ENCODE measurements at regions of chr12 and their contacts with region 1.

Region 1: DNA sequence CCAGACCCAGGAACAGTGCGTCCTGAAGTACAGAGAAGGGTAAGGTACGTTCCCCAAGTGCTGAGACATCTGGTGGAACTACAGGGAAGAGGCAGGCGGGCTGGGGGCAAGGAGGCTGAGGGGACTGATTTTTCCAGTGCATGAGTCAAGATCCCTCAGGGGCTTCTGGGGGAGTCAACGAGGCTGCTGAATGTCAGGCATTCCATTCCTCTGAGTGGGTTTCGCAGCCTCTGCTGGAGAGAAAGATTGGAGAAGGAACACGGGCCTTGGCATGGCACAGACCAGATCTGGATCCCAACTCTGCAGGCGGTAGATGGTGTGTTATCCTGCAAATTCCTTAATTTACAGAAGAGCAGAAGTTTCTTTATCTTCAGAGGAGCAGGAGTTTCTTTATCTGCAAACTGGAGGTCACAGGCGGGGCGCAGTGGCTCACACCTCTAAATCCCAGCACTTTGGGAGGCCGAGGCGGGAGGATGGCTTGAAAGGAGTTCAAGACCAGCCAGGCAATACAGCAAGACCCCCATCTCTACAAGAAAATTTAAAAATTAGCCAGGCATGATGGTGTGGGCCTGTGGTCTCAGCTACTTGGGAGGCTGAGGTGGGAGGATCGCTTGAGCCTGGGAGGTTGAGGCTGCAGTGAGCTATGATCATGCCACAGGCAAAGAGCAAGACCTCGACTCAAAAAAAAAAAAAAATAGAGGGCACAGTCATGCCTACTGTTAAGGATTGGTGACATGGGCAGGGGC is 132.6 kb upstream of the MAP1LC3B2 start:
- DNase-seq: peak; percentile 82 to 92
- H3K4me3 ChIP-seq: no peak overlapping the region
- H3K4me3 Mint-ChIP-seq: peak overlapping the region; percentile 64
- H3K27ac Mint-ChIP-seq: peak overlapping the region; percentile 84
- H3K4me1 ChIP-seq: peaks cover 45% of the 10 kb centered on the region
- H3K4me1 Mint-ChIP-seq: peaks cover 32% of the 10 kb centered on the region
- H3K27me3 ChIP-seq: no peaks in the 10 kb centered on the region
- H3K27me3 Mint-ChIP-seq: no peaks in the 10 kb centered on the region
- CTCF ChIP-seq: peak; percentile 36 to 50

Region 2: DNA sequence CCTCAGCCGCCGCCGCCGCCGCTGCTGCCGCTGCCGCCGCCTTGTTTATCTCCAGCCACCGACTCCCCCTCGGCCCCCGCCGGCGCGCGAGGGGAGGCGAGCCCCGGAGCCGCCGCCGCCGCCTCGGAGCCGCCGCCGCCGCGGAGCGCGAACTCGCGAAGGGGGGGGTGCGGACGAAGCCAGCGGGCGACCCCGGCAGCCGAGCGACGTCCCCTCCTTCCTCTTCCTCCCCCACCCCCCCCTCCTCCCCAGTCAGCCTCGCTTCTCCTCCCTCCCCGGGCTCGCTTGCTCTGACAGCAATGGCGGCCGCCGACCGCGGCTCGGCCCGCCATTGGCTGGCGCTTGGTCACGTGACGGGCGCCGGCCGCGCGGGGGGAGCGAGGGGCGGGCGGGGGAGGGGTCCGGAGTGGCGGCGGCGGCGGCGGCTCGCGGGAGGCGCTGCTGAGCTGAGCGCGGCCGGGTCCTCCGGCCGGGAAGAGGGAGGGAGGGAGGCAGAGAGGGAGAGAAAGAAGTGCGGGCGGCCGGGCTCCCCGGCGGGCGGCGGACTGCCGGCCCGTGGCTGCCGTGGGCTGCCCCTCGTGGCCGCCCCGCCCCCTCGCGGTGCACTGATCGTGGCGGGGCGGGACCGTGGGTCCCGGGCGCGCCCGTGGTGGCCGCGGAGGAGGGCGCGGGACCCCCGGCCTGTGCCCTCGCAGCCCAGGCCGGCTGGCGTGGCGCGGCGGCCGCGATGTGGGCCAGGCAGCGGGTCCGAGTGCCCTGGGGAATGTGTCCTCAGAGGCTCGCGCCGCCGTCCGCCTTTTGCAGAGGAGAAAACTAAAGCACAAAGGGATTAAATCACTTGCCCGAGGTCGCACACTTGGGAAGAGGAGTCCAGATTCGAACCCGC is 148.9 kb before region 1 on chr12 and contains the start of gene MED13L:
- CTCF ChIA-PET with region 1: interaction called, 3 read pairs
- POLR2A ChIA-PET with region 1: no interaction called
- intact Hi-C with region 1: loop called (anchors 2 kb)
- DNase-seq: peak; percentile 86 to 92
- H3K4me3 ChIP-seq: peak within 1 kb of the TSS; percentile 81
- H3K4me3 Mint-ChIP-seq: peak within 1 kb of the TSS; percentile 83
- H3K27ac Mint-ChIP-seq: peak within 1 kb of the TSS; percentile 92
- H3K4me1 ChIP-seq: peaks cover 20% of the 10 kb centered on the region
- H3K4me1 Mint-ChIP-seq: peaks cover 30% of the 10 kb centered on the region
- H3K27me3 ChIP-seq: no peaks in the 10 kb centered on the region
- H3K27me3 Mint-ChIP-seq: no peaks in the 10 kb centered on the region
- CTCF ChIP-seq: peak in 1 of 2 experiments; percentile 18
- total RNA-seq, gene MED13L: 160 and 168 TPM in 2 replicates

Region 3: GRCh38 chr12:116368196-116369194 is 58.1 kb before region 1 on chr12:
- CTCF ChIA-PET with region 1: no interaction called
- POLR2A ChIA-PET with region 1: no interaction called
- intact Hi-C with region 1: loop called (anchors 1 kb)
- DNase-seq: peak; percentile 92 to 96
- H3K4me3 ChIP-seq: no peak overlapping the region
- H3K4me3 Mint-ChIP-seq: peak overlapping the region; percentile 56
- H3K27ac Mint-ChIP-seq: peak overlapping the region; percentile 90
- H3K4me1 ChIP-seq: peaks cover 65% of the 10 kb centered on the region
- H3K4me1 Mint-ChIP-seq: peaks cover 32% of the 10 kb centered on the region
- H3K27me3 ChIP-seq: no peaks in the 10 kb centered on the region
- H3K27me3 Mint-ChIP-seq: no peaks in the 10 kb centered on the region
- CTCF ChIP-seq: no peak

Region 4: GRCh38 chr12:116406516-116406915 is 20.0 kb before region 1 on chr12:
- CTCF ChIA-PET with region 1: interaction called, 4 read pairs
- POLR2A ChIA-PET with region 1: interaction called, 6 read pairs
- intact Hi-C with region 1: loop called (anchors 2 kb)
- DNase-seq: peak; percentile 89 to 94
- H3K4me3 ChIP-seq: no peak overlapping the region
- H3K4me3 Mint-ChIP-seq: no peak overlapping the region
- H3K27ac Mint-ChIP-seq: peak overlapping the region; percentile 63
- H3K4me1 ChIP-seq: peaks cover 12% of the 10 kb centered on the region
- H3K4me1 Mint-ChIP-seq: peaks cover 19% of the 10 kb centered on the region
- H3K27me3 ChIP-seq: no peaks in the 10 kb centered on the region
- H3K27me3 Mint-ChIP-seq: no peaks in the 10 kb centered on the region
- CTCF ChIP-seq: no peak

Region 5: DNA sequence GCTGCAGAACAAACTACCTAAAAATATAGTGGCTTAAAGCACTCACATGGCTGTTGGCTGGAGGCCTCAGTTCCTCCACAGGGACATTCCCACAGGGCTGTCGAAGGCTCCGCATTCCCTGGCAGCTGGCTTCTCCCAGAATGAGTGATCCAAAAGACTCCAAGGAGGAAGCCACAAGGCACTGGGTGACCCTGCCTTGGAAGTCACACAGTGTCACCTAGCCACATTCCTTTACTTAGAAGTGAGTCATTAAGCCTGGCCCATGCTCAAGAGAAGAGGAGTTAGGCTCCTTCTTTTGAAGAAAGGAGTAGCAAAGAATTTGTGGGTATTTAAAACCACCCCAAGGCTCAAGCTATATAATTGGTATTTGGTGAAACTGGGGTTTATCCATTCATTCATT is 68.7 kb after region 1 on chr12:
- CTCF ChIA-PET with region 1: no interaction called
- POLR2A ChIA-PET with region 1: no interaction called
- intact Hi-C with region 1: loop called (anchors 2 kb)
- DNase-seq: peak; percentile 71 to 82
- H3K4me3 ChIP-seq: no peak overlapping the region
- H3K4me3 Mint-ChIP-seq: peak overlapping the region; percentile 42
- H3K27ac Mint-ChIP-seq: peak overlapping the region; percentile 93
- H3K4me1 ChIP-seq: peaks cover 19% of the 10 kb centered on the region
- H3K4me1 Mint-ChIP-seq: peaks cover 41% of the 10 kb centered on the region
- H3K27me3 ChIP-seq: no peaks in the 10 kb centered on the region
- H3K27me3 Mint-ChIP-seq: no peaks in the 10 kb centered on the region
- CTCF ChIP-seq: no peak

Region 6: DNA sequence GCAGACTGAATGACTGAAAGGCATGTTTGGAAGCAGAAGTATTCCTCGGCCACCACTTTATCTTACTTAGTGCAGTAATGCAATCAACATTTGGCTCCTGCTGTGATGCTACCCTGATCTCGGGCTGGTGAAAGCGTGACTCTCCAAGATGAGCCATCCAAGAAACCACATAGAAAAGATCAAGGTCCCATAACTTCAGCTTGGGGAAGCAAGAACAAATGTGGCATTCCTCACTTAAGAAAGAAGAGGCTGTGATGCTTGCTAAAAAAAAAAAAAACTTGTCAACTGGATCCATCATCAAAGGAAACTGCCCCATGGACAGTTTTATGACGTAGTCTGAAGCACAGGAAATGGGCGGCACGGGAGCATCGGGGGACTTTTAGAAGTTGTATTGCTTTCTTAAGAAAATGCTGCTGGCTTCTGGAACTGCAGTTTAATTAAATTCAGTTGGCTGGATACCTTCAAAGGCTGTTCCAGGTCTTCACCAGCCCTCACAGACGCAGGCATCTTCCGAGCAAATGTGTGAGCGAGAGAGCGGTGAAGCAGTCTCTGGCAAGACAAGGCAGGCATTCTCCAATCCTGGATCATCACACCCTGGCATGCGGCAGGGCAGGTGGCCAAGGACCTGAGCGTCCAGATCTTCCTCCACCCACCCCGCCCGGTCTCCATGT is 94.4 kb after region 1 on chr12:
- CTCF ChIA-PET with region 1: no interaction called
- POLR2A ChIA-PET with region 1: no interaction called
- intact Hi-C with region 1: no loop called
- DNase-seq: no peak
- H3K4me3 ChIP-seq: no peak overlapping the region
- H3K4me3 Mint-ChIP-seq: no peak overlapping the region
- H3K27ac Mint-ChIP-seq: no peak overlapping the region
- H3K4me1 ChIP-seq: peaks cover 14% of the 10 kb centered on the region
- H3K4me1 Mint-ChIP-seq: peaks cover 20% of the 10 kb centered on the region
- H3K27me3 ChIP-seq: no peaks in the 10 kb centered on the region
- H3K27me3 Mint-ChIP-seq: no peaks in the 10 kb centered on the region
- CTCF ChIP-seq: no peak

Region 7: GRCh38 chr12:116539905-116540482 is 113.4 kb after region 1 on chr12:
- CTCF ChIA-PET with region 1: no interaction called
- POLR2A ChIA-PET with region 1: no interaction called
- intact Hi-C with region 1: no loop called
- DNase-seq: no peak
- H3K4me3 ChIP-seq: no peak overlapping the region
- H3K4me3 Mint-ChIP-seq: no peak overlapping the region
- H3K27ac Mint-ChIP-seq: no peak overlapping the region
- H3K4me1 ChIP-seq: peaks cover 10% of the 10 kb centered on the region; the same call in 1 of the 2 replicates
- H3K4me1 Mint-ChIP-seq: peaks cover 19% of the 10 kb centered on the region
- H3K27me3 ChIP-seq: no peaks in the 10 kb centered on the region
- H3K27me3 Mint-ChIP-seq: no peaks in the 10 kb centered on the region
- CTCF ChIP-seq: no peak

Region 8: DNA sequence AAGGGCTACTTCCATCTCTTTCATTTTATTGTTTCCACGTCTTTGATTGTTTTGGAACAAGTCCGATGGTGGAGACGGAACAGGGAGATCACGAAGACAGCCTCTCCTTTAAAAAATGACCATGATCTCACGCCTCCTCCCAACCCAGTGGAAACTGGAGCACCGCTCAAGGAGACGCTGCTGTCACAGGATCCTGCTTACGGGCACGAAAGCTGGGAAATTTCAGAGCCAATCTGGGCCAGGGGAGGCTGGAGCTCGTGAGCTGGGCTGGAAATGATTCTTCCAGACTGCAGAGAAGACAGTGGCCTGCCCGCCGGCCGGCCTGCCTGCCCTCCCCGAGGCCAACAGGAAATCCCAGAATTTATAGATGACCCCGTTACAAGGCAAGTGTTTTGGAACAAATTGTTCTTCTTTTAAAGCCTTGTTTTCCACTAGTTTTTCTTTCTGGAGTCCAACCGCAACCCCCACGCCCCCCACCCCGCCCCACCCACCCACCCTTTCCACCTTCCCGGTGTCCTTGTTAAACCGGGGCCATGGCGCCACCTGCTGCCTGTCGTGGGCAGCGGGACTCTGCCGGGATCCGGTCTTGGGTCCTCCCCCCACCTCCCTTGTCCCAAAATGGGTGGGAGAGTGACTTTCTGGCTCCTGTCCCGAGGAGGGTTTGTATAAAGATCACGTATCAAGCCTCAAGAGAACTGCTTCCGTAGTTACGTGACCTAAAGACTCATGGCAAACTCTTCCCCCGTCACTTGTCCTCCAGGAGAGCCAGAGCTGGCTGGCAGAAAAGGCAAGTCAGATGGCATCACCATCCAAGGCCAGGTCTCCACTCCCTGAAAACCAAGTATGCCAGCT is 172.9 kb after region 1 on chr12:
- CTCF ChIA-PET with region 1: no interaction called
- POLR2A ChIA-PET with region 1: no interaction called
- intact Hi-C with region 1: loop called (anchors 10 kb)
- DNase-seq: peak in 1 of 2 experiments; percentile 34
- H3K4me3 ChIP-seq: no peak overlapping the region
- H3K4me3 Mint-ChIP-seq: peak overlapping the region; percentile 8
- H3K27ac Mint-ChIP-seq: peak overlapping the region; percentile 22
- H3K4me1 ChIP-seq: peaks cover 22% of the 10 kb centered on the region
- H3K4me1 Mint-ChIP-seq: peaks cover 37% of the 10 kb centered on the region
- H3K27me3 ChIP-seq: no peaks in the 10 kb centered on the region
- H3K27me3 Mint-ChIP-seq: no peaks in the 10 kb centered on the region
- CTCF ChIP-seq: peak in 1 of 2 experiments; percentile 13

Measured in Caco-2 (cell line).